CD4-positive, alpha-beta memory T cell (primary cell): ENCODE measurements at regions of chr10 and their contacts with region 1.

Region 1: DNA sequence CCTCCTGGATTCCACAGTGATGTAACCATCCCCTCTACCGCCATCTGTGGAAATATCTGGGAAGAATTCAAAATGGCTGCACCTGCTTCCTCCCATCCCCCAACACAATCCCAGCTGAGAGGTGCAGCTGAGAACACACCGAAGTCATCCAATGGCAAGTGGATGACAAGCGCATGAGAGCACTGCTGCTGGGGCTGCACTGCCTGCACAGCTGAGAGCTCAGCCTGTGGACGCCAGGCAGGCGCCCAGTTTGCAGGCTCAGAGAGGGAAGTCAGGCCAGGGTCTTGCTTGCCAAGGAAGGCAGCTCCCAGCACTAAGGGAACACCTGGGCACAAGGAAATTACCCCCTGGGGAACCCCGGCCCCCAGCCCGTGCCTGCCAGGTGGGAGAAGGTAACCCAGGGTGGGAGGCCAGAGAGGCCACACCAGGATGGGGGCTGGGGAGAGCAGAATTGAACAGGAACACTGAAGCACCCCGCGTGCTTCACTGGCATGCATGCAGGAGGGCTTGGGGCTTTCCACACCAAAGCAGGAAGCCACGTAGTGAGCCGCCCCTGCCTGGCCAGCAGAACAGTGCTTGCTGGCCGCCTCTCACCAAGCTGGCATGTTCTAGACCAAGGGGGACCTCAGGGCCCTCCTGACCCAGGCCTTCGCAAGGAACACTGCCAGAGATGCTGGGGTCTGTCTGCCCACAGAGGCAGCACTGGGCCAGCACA is 46.2 kb downstream of the FAM53B start:
- DNase-seq: peak; percentile 40 to 79 (median 50)
- H3K4me3 ChIP-seq: peak overlapping the region; percentile 11 to 30
- H3K4me3 Mint-ChIP-seq: peak overlapping the region; percentile 20 to 96 (median 80)
- H3K27ac ChIP-seq: peak overlapping the region; percentile 90
- H3K27ac Mint-ChIP-seq: peak overlapping the region; percentile 92 to 99 (median 97)
- H3K4me1 ChIP-seq: peaks cover 100% of the 10 kb centered on the region
- H3K4me1 Mint-ChIP-seq: peaks cover 69 to 100% (median 93%) of the 10 kb centered on the region in 4 donors
- H3K27me3 ChIP-seq: no peaks in the 10 kb centered on the region
- H3K27me3 Mint-ChIP-seq: no peaks in the 10 kb centered on the region

Region 2: GRCh38 chr10:124626759-124627380 is 71.1 kb before region 1 on chr10:
- CTCF ChIA-PET with region 1: interaction called, 6 read pairs
- POLR2A ChIA-PET with region 1: interaction called, 13 read pairs
- intact Hi-C with region 1: no loop called
- DNase-seq: peak; percentile 46 to 60 (median 55)
- H3K4me3 ChIP-seq: peak overlapping the region; percentile 11 to 14
- H3K4me3 Mint-ChIP-seq: peak overlapping the region in 7 of 8 donors; percentile 36 to 76 (median 69)
- H3K27ac ChIP-seq: peak overlapping the region; percentile 49
- H3K27ac Mint-ChIP-seq: peak overlapping the region; percentile 82 to 96 (median 89)
- H3K4me1 ChIP-seq: peaks cover 68% of the 10 kb centered on the region
- H3K4me1 Mint-ChIP-seq: peaks cover 34 to 81% (median 50%) of the 10 kb centered on the region in 4 donors
- H3K27me3 ChIP-seq: no peaks in the 10 kb centered on the region
- H3K27me3 Mint-ChIP-seq: no peaks in the 10 kb centered on the region

Region 3: GRCh38 chr10:124671486-124672075 is 26.4 kb before region 1 on chr10:
- CTCF ChIA-PET with region 1: interaction called, 4 read pairs
- POLR2A ChIA-PET with region 1: interaction called, 118 read pairs
- intact Hi-C with region 1: no loop called
- DNase-seq: peak in 1 of 5 donors; percentile 33
- H3K4me3 ChIP-seq: no peak overlapping the region
- H3K4me3 Mint-ChIP-seq: peak overlapping the region in 7 of 8 donors; percentile 53 to 84 (median 67)
- H3K27ac ChIP-seq: peak overlapping the region; percentile 43
- H3K27ac Mint-ChIP-seq: peak overlapping the region; percentile 83 to 96 (median 90)
- H3K4me1 ChIP-seq: peaks cover 100% of the 10 kb centered on the region
- H3K4me1 Mint-ChIP-seq: peaks cover 68 to 99% (median 88%) of the 10 kb centered on the region in 4 donors
- H3K27me3 ChIP-seq: no peaks in the 10 kb centered on the region
- H3K27me3 Mint-ChIP-seq: no peaks in the 10 kb centered on the region

Region 4: GRCh38 chr10:124683814-124684213 is 14.2 kb before region 1 on chr10:
- CTCF ChIA-PET with region 1: interaction called, 18 read pairs
- POLR2A ChIA-PET with region 1: interaction called, 118 read pairs
- intact Hi-C with region 1: loop called (anchors 1 kb)
- DNase-seq: peak in 1 of 5 donors; percentile 31
- H3K4me3 ChIP-seq: no peak overlapping the region
- H3K4me3 Mint-ChIP-seq: peak overlapping the region in 6 of 8 donors; percentile 17 to 83 (median 52)
- H3K27ac ChIP-seq: peak overlapping the region; percentile 25
- H3K27ac Mint-ChIP-seq: peak overlapping the region; percentile 58 to 92 (median 87)
- H3K4me1 ChIP-seq: peaks cover 96% of the 10 kb centered on the region
- H3K4me1 Mint-ChIP-seq: peaks cover 67 to 99% (median 85%) of the 10 kb centered on the region in 4 donors
- H3K27me3 ChIP-seq: no peaks in the 10 kb centered on the region
- H3K27me3 Mint-ChIP-seq: no peaks in the 10 kb centered on the region

Region 5: DNA sequence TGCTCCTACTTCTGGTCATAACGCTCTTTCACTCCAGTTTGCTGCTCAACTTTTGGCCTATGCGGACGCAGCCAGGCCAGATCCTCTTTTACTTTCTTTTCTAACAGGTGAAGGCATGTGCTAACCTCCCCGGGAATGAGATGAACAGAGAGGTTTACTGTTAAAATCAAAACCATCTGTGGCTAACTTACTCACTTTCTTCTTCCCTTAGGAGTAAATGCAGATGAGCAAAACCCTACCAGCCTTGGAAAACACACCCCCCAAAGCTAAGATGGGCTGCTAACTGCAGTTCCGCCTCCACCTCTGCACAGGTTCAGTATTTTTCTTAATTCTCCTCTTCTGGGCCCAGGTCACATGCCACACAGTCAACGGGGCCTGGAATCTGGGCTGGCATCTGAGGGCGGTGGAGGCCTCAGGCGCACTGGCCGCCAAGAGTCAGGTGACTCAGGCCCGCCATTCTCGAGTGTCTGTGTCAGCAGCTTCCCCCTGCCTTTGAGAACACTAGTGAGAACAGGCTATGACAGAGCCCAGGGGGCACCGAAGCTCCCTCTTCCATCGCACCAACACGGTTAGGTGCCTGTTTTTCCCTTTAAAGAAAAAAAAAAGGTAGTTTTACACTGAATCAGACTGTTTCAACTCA is 35.1 kb after region 1 on chr10:
- CTCF ChIA-PET with region 1: interaction called, 129 read pairs
- POLR2A ChIA-PET with region 1: interaction called, 544 read pairs
- intact Hi-C with region 1: no loop called
- DNase-seq: peak; percentile 37 to 77 (median 48)
- H3K4me3 ChIP-seq: peak overlapping the region; percentile 9 to 15
- H3K4me3 Mint-ChIP-seq: peak overlapping the region; percentile 72 to 93 (median 80)
- H3K27ac ChIP-seq: peak overlapping the region; percentile 78
- H3K27ac Mint-ChIP-seq: peak overlapping the region; percentile 87 to 96 (median 94)
- H3K4me1 ChIP-seq: peaks cover 100% of the 10 kb centered on the region
- H3K4me1 Mint-ChIP-seq: peaks cover 77 to 100% (median 90%) of the 10 kb centered on the region in 4 donors
- H3K27me3 ChIP-seq: no peaks in the 10 kb centered on the region
- H3K27me3 Mint-ChIP-seq: no peaks in the 10 kb centered on the region